SK-N-SH (cell line): ENCODE measurements at regions of chr2 and their contacts with region 1.

Region 1: DNA sequence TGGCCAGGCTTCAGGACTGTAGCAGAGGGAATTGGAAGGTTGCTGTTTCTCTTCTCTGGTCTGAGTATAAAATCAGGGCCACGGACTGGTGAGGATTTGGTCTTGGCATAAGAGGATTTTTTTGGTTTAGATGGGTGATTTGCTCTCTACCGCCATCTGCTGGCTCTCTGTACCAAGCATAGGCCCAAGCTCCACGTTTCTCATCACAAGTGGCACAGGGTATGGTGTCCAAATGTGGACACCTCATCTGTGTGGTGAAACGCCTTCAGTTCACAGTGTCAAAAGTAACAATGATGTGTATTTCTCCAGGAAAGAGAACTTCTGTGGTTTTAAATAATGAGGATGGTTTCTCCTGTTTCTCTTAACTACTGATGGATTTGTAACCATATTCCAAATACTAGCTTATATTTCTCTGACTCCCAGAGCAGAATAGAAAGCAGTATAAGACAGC is 115.1 kb downstream of the EML6 start:
- DNase-seq: peak; percentile 66
- H3K4me3 ChIP-seq: peak overlapping the region in 1 of 2 experiments; percentile 27; a peak in 1 of 4 replicates
- H3K27ac ChIP-seq: no peak overlapping the region
- H3K4me1 ChIP-seq: peaks cover 0 to 4% of the 10 kb centered on the region in 2 experiments; a peak in 2 of 4 replicates
- H3K27me3 ChIP-seq: no peaks in the 10 kb centered on the region
- CTCF ChIP-seq: peak; percentile 95
- EP300 ChIP-seq: no peak
- RAD21 ChIP-seq: peak; percentile 81

Region 2: GRCh38 chr2:54106631-54107454 is 731.8 kb before region 1 on chr2:
- CTCF ChIA-PET with region 1: interaction called, 23 read pairs
- POLR2A ChIA-PET with region 1: no interaction called
- DNase-seq: peak; percentile 59
- H3K4me3 ChIP-seq: no peak overlapping the region; a peak in 1 of 4 replicates
- H3K27ac ChIP-seq: peak overlapping the region; percentile 6 to 97; a peak in 3 of 4 replicates
- H3K4me1 ChIP-seq: peaks cover 8 to 34% of the 10 kb centered on the region in 2 experiments
- H3K27me3 ChIP-seq: no peaks in the 10 kb centered on the region
- CTCF ChIP-seq: peak; percentile 88
- EP300 ChIP-seq: no peak
- RAD21 ChIP-seq: peak; percentile 93

Region 3: GRCh38 chr2:54687595-54688152 is 150.9 kb before region 1 on chr2:
- CTCF ChIA-PET with region 1: no interaction called
- POLR2A ChIA-PET with region 1: no interaction called
- DNase-seq: no peak
- H3K4me3 ChIP-seq: no peak overlapping the region
- H3K27ac ChIP-seq: no peak overlapping the region
- H3K4me1 ChIP-seq: no peaks in the 10 kb centered on the region
- H3K27me3 ChIP-seq: no peaks in the 10 kb centered on the region
- CTCF ChIP-seq: no peak
- EP300 ChIP-seq: no peak
- RAD21 ChIP-seq: no peak

Region 4: DNA sequence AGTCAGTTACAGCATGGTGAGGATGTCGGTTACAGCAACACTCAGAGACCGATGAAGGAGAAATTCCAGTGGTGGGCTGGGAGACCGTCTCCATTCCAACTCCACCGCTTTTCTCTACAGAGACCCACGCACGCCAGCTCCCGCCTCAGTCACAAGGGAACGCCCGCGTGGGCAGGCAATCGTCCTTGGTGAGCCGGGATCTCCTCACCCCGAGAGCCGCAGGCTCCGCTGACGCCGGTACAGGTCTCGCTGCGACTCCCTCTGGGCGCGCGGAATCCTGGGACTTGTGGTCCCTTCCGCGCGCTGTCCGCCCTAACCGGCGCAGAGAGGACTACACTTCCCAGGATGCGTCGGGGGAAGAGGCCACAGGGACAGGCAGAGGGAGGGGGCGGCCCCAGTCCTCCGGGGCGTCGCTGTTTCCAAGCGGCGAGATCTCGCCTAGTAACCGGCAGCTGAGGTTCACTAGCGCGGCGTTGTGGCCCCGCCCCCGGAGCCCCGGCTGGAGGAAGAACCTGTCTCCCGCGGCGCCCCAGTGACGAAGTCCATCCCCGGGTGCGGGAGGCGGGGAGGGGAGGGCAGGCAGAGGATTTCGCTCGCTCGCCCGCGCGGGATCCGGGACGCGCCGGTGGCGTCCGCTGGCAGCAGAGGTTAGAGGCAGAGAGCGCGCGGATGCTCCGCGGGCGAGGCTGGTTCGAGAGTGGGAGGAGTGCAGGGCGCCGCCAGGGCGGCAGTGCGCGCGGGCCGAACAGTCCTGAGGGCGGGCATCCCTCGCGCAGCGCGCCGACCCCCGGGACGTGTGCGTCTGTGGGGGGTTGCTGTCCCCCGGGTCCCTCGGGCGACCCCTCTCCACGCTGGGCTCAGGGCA is 115.2 kb before region 1 on chr2 and contains the start of gene EML6:
- CTCF ChIA-PET with region 1: interaction called, 14 read pairs
- POLR2A ChIA-PET with region 1: interaction called, 8 read pairs
- DNase-seq: peak; percentile 98
- H3K4me3 ChIP-seq: peak within 1 kb of the TSS; percentile 82 to 86
- H3K27ac ChIP-seq: peak within 1 kb of the TSS; percentile 48 to 89; a peak in 3 of 4 replicates
- H3K4me1 ChIP-seq: peaks cover 0 to 10% of the 10 kb centered on the region in 2 experiments; a peak in 2 of 4 replicates
- H3K27me3 ChIP-seq: no peaks in the 10 kb centered on the region; the same call in 1 of the 2 replicates
- CTCF ChIP-seq: peak; percentile 42
- EP300 ChIP-seq: no peak; a peak in 2 of 4 replicates
- RAD21 ChIP-seq: no peak
- polyA plus RNA-seq, gene EML6: 1.1 and 1.6 TPM in 2 replicates

Region 5: GRCh38 chr2:54824567-54824966 is 14.0 kb before region 1 on chr2:
- CTCF ChIA-PET with region 1: interaction called, 31 read pairs
- POLR2A ChIA-PET with region 1: no interaction called
- DNase-seq: no peak
- H3K4me3 ChIP-seq: no peak overlapping the region
- H3K27ac ChIP-seq: no peak overlapping the region
- H3K4me1 ChIP-seq: no peaks in the 10 kb centered on the region; a peak in 1 of 4 replicates
- H3K27me3 ChIP-seq: no peaks in the 10 kb centered on the region; the same call in 1 of the 2 replicates
- CTCF ChIP-seq: no peak
- EP300 ChIP-seq: no peak
- RAD21 ChIP-seq: no peak

Region 6: GRCh38 chr2:54871457-54872107 is 33.0 kb after region 1 on chr2:
- CTCF ChIA-PET with region 1: interaction called, 11 read pairs
- POLR2A ChIA-PET with region 1: no interaction called
- DNase-seq: no peak
- H3K4me3 ChIP-seq: no peak overlapping the region
- H3K27ac ChIP-seq: no peak overlapping the region
- H3K4me1 ChIP-seq: no peaks in the 10 kb centered on the region; a peak in 1 of 4 replicates
- H3K27me3 ChIP-seq: no peaks in the 10 kb centered on the region
- CTCF ChIP-seq: no peak
- EP300 ChIP-seq: no peak
- RAD21 ChIP-seq: no peak